ENCODE measurements at regions of chr15 and their contacts with region 1.

Region 1: DNA sequence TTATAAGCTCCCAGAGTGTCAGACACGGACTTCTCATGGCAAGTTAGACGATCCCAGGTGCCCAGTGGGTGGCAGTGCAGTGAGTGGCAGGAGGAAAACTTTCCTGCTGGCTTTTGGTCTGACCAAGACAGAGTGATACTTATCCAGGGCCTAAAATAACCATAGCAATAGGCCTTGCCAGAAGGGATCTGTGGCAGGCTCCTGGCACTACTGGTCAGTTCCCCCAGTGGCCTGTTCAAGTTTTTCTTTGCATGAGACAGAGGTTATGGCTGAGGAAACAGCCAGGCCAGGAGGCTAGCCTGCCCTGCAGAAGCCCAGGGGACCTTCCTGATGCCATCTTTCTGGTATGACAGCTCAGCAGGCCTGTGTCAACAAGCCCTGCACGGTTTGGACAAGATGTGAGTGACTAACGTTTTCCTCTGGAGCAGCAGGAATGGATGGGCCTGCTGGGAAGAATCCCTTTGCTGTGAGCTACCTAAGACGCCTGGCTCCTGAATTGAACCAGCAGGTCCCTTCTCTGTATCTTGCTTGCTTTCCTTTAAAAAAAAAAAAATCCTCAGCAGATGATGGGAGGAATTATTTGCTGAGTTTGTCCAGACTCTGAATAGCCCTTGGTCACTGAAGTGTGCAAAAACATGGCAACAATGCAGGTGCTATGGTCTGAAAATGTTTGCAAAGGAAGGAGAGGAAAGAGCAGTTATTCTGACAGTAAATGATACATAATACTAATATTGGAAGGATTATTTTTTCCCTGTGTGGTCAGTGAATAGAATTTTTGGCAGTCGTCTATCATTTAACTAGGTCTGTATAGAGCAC is 18.0 kb downstream of the SCG5 start:
- DNase-seq: no peak
- H3K4me3 ChIP-seq: no peak overlapping the region
- H3K27ac ChIP-seq: no peak overlapping the region
- H3K4me1 ChIP-seq: no peaks in the 10 kb centered on the region
- H3K27me3 ChIP-seq: no peaks in the 10 kb centered on the region
- CTCF ChIP-seq: no peak

Region 2: DNA sequence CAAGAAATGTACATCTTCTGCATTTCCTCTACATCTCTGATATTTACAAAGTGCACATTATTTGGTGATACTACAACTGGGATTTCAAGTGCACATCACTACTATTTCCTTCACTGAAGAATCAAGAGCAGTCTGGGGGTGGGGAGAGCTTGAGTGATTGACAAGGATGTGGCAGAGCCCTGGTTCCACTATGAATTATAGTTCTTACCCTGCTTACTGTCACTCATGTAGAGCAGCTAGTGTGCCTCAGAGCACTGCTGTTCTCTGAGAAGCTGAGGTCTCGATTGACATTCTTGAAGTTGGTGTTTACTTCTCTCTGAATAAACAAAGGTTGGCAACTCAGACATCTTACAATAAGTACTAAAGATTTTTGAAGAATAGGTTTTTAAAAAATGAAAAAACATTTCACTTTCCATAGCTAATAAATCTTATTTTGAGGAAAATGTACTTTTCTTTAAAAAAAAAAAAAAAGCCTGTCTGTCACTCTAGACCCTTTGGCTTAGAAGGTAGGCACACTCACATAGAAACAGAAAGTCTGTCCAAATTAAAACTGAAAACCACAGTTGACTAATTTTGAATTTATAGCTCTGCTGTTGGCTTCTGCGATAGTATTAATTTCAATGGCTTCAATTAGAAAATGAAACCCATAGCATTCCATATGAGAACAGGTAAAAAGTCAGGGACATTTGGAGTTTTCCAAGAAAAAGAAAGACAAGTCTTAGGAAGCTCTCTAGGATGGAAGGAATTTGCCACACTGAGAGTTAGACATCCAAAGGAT is 63.8 kb after region 1 on chr15:
- intact Hi-C with region 1: no loop called
- DNase-seq: no peak
- H3K4me3 ChIP-seq: no peak overlapping the region
- H3K27ac ChIP-seq: no peak overlapping the region
- H3K4me1 ChIP-seq: peaks cover 3% of the 10 kb centered on the region
- H3K27me3 ChIP-seq: peaks cover 14% of the 10 kb centered on the region
- CTCF ChIP-seq: no peak

Region 3: DNA sequence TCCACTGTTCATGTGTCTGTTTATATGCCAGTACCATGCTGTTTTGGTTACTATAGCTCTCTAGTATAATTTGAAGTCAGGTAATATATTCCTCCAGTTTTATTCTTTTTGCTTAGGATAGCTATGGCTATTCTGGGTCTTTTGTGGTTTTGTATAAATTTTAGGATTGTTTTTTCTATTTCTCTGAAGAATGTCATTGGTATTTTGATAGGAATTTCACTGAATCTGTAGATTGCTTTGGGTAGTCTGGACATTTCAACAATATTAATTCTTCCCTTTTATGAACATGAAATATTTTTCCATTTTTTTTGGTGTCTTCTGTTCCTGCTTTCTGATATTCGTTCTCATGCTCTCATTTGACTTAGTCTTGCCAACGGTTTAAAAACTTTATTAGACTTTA is 97.9 kb after region 1 on chr15:
- intact Hi-C with region 1: no loop called
- DNase-seq: no peak
- H3K4me3 ChIP-seq: no peak overlapping the region
- H3K27ac ChIP-seq: no peak overlapping the region
- H3K4me1 ChIP-seq: no peaks in the 10 kb centered on the region
- H3K27me3 ChIP-seq: no peaks in the 10 kb centered on the region
- CTCF ChIP-seq: no peak

Region 4: GRCh38 chr15:32774022-32774421 is 114.5 kb after region 1 on chr15:
- intact Hi-C with region 1: no loop called
- DNase-seq: no peak
- H3K4me3 ChIP-seq: no peak overlapping the region
- H3K27ac ChIP-seq: no peak overlapping the region
- H3K4me1 ChIP-seq: no peaks in the 10 kb centered on the region
- H3K27me3 ChIP-seq: no peaks in the 10 kb centered on the region
- CTCF ChIP-seq: no peak

Region 5: DNA sequence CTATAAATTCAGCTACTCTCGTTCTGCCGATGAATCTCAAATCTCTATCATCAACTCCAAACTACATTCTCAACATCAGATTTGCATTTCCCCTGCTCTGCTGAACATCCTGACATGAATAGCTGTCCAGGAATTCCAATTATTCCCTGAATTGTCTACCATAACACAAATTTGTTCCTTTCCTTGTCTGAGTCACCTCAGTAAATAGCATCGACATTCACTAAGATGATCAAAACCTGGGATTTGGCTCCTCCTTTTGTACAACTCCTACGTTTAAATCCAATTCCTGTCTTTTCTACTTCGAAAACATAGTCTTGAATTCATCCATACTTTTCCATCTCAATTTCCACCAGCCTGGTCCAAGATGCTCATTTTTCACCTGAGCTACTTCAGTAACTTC is 165.2 kb after region 1 on chr15:
- intact Hi-C with region 1: loop called (anchors 10 kb)
- DNase-seq: no peak
- H3K4me3 ChIP-seq: no peak overlapping the region
- H3K27ac ChIP-seq: no peak overlapping the region
- H3K4me1 ChIP-seq: no peaks in the 10 kb centered on the region
- H3K27me3 ChIP-seq: no peaks in the 10 kb centered on the region
- CTCF ChIP-seq: no peak

Region 6: GRCh38 chr15:32994810-32995424 is 335.4 kb after region 1 on chr15:
- intact Hi-C with region 1: loop called (anchors 5 kb)
- DNase-seq: no peak
- H3K4me3 ChIP-seq: no peak overlapping the region
- H3K27ac ChIP-seq: no peak overlapping the region
- H3K4me1 ChIP-seq: no peaks in the 10 kb centered on the region
- H3K27me3 ChIP-seq: no peaks in the 10 kb centered on the region
- CTCF ChIP-seq: peak; percentile 52

Measured in colonic mucosa (tissue), 4 donors.